ENCODE measurements at regions of chr15 and their contacts with region 1.

Region 1: GRCh38 chr15:53559364-53560277 is 199.8 kb downstream of the WDR72 start:
- DNase-seq: no peak

Region 2: DNA sequence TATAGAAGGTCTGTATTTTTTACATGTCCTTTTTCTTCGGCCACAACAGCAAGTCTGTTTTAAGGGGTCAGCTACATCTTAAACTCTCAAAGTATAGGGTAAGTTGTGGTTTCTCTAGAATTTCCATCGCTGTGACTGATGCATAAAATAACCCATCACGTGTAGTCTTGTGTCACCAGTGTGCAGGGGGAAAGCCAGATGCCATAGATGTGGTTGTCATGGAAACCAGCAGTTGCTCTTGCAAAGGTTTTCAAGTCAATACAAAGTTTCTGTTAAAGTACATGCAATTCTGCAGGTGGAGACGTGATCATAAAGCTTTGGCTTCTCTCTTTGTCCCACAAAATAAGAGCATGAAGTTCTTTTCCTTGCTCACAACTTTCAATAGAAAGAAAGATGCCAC is 559.2 kb before region 1 on chr15:
- intact Hi-C with region 1: no loop called
- DNase-seq: no peak

Region 3: DNA sequence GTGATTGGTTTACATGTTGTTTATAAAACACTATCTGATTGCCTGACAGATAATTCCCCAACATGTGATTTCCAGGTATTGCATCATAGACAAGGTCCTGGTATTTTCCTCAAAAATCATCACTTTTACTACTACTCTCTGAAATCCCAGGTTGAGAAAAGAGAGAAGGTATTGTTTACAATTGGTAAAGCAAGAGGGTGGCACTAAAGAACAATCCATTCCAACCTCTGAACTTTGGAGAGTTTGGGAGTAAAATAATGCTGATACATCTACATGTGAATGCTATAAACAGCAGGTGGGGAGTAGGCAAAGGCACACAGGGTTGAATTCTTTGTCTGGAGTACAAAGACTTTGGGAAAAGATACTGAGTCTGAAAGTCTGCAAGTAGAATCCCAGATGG is 65.6 kb after region 1 on chr15:
- intact Hi-C with region 1: loop called (anchors 10 kb)
- DNase-seq: no peak